AG04450 (cell line): ENCODE measurements at regions of chr1 and their contacts with region 1.

Region 1: DNA sequence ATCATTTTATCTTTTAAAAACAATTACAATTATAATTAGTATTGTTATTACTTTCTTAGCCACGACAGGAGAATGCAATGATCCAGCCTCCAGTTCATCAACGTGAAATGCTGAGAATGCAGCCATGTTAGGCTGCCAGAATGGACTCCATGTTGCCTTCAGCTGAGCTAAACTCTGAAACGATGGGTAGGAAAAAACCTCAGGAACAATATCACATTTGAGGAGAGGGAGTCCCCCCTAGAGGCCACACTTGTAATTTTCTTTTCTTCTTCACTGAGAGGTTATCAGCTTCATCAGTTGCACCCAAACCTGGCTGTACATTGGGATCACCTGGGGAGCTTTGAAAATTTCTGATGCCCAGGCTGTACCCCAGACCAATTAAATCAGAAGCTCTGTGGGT is 34.6 kb upstream of the DNAH14 start:
- DNase-seq: peak; percentile 10
- H3K4me3 ChIP-seq: no peak overlapping the region
- H3K27ac ChIP-seq: no peak overlapping the region
- H3K27me3 ChIP-seq: peaks cover 2% of the 10 kb centered on the region
- CTCF ChIP-seq: peak; percentile 57

Region 2: DNA sequence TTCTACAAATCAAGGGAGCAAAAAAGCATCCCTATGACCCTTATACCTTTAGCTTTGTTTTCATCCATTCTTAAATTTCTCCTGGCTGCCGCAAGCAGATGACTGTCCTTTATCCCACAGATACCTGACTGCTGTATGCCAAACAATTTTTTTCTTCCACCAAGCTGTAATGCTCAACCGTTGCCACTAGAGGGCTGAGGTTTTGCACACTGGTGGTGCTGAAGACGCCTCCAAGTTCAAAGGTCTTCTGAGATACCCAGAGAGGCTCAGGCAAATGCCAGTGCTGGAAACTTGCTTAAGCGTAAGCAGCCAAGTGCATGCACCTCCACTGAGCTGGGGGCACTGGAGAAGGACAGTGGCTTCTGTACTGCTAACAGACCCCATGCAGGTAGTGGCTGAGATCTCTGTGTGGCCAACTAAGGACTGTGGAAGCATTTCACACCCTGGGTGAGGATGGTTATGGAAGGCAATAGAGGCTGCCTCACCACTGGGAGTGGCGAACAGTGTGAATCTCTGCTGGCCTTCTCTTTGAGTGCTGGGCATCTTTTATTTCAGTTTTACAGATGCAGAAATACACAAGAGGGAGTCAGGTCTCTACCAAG is 250.3 kb before region 1 on chr1:
- CTCF ChIA-PET with region 1: interaction called, 20 read pairs
- POLR2A ChIA-PET with region 1: no interaction called
- DNase-seq: no peak
- H3K4me3 ChIP-seq: no peak overlapping the region
- H3K27ac ChIP-seq: no peak overlapping the region
- H3K27me3 ChIP-seq: no peaks in the 10 kb centered on the region
- CTCF ChIP-seq: peak; percentile 90

Region 3: GRCh38 chr1:224879162-224879803 is 15.6 kb before region 1 on chr1:
- CTCF ChIA-PET with region 1: interaction called, 22 read pairs
- POLR2A ChIA-PET with region 1: no interaction called
- DNase-seq: no peak
- H3K4me3 ChIP-seq: no peak overlapping the region
- H3K27ac ChIP-seq: no peak overlapping the region
- H3K27me3 ChIP-seq: peaks cover 10% of the 10 kb centered on the region
- CTCF ChIP-seq: no peak

Region 4: GRCh38 chr1:224906340-224906739 is 11.4 kb after region 1 on chr1:
- CTCF ChIA-PET with region 1: interaction called, 13 read pairs
- POLR2A ChIA-PET with region 1: no interaction called
- DNase-seq: no peak
- H3K4me3 ChIP-seq: no peak overlapping the region
- H3K27ac ChIP-seq: no peak overlapping the region
- H3K27me3 ChIP-seq: peaks cover 13% of the 10 kb centered on the region
- CTCF ChIP-seq: no peak

Region 5: DNA sequence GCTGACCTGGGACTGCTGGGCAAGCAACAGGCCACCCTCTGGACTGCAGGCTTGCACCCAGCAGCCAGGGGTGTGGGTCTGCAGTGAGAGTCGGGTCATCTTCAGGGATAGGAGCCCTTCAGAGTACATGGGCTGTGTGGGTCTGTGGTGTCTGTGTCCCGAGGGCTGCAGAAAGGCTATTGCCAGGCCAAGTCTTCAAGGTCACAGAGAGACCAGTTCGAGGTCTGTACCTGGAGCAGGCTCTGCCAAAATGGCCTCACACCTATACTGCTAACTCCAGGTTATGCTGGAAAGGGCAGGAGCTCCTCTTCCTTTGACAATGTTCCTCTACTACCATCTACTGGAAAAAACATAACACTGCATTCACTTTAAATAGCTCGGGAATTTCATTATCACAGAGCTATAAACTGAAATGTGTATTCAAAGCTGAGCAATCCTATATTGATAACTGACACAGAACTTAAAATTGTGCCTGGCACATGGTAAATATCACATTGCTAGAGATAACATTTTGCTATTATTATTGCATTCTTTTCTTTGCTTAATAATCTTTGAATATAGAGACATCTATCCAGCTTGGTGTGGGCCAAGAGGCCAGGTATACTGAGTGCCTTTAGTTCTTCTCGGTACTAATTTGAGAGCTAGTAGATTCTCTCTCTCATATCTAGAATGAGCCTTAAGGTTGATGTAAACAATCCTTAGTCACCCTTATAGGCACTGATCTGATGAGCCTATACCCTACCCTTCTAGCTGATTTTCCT is 27.7 kb after region 1 on chr1:
- CTCF ChIA-PET with region 1: interaction called, 15 read pairs
- POLR2A ChIA-PET with region 1: no interaction called
- DNase-seq: peak; percentile 1
- H3K4me3 ChIP-seq: no peak overlapping the region
- H3K27ac ChIP-seq: no peak overlapping the region
- H3K27me3 ChIP-seq: no peaks in the 10 kb centered on the region
- CTCF ChIP-seq: peak; percentile 82

Region 6: GRCh38 chr1:224939844-224940425 is 45.0 kb after region 1 on chr1:
- CTCF ChIA-PET with region 1: no interaction called
- POLR2A ChIA-PET with region 1: no interaction called
- DNase-seq: no peak
- H3K4me3 ChIP-seq: no peak overlapping the region
- H3K27ac ChIP-seq: no peak overlapping the region
- H3K27me3 ChIP-seq: no peaks in the 10 kb centered on the region
- CTCF ChIP-seq: no peak

Region 7: GRCh38 chr1:224980181-224980580 is 85.3 kb after region 1 on chr1:
- CTCF ChIA-PET with region 1: no interaction called
- POLR2A ChIA-PET with region 1: no interaction called
- DNase-seq: no peak
- H3K4me3 ChIP-seq: no peak overlapping the region
- H3K27ac ChIP-seq: no peak overlapping the region
- H3K27me3 ChIP-seq: peaks cover 3% of the 10 kb centered on the region
- CTCF ChIP-seq: no peak

Region 8: GRCh38 chr1:225595974-225596551 is 701.1 kb after region 1 on chr1:
- CTCF ChIA-PET with region 1: no interaction called
- POLR2A ChIA-PET with region 1: no interaction called
- DNase-seq: no peak
- H3K4me3 ChIP-seq: no peak overlapping the region
- H3K27ac ChIP-seq: no peak overlapping the region
- H3K27me3 ChIP-seq: no peaks in the 10 kb centered on the region
- CTCF ChIP-seq: no peak